ENCODE measurements at regions of chr2 and their contacts with region 1.

Region 1: GRCh38 chr2:64330281-64331113 is 123.5 kb upstream of the LGALSL start:
- DNase-seq: peak; percentile 82
- H3K4me3 Mint-ChIP-seq: peak overlapping the region; percentile 54
- H3K27ac Mint-ChIP-seq: peak overlapping the region; percentile 46
- H3K4me1 Mint-ChIP-seq: peaks cover 41% of the 10 kb centered on the region
- H3K27me3 Mint-ChIP-seq: no peaks in the 10 kb centered on the region

Region 2: DNA sequence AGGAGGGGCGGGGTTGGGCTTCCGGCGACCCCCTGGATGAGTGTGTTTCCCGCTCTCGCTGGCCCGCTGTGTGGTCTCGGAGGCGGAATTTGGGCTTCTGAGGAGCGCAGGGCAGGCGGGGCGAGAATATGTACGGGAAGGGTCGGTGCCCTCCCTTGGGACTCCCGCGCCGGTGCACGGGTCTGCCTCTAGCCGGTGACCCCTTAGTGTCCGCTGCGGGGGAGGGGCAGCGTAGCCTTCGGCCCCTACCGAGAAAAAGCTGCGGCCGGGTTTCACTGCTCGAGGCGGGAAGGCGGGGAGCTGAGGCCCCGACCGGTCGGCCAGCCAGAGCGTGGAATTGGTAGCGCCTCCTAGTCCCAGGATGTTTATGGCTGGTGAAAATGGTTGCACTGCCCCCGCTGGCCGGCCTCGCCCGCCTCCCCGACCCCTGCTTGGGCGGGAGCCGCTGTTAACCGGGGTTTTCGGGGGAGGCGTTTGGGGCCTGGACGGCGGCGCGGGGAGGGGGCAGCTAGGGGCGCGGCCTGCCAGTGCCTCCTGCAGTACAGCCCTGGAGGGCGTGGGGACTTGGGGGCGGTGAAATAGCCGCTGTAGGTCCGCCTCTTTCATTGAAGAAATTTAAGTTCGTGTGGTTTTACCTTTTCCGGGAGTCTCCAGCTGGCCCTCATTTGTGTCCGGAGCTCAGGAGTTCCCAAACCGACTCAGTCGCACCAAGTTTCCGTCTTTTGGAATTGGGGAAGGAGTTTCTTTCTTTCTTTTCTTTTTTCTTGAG is 489.1 kb before region 1 on chr2 and contains the start of gene UGP2:
- CTCF ChIA-PET with region 1: no interaction called
- POLR2A ChIA-PET with region 1: interaction called, 7 read pairs
- intact Hi-C with region 1: loop called (anchors 2 kb)
- DNase-seq: peak; percentile 91
- H3K4me3 Mint-ChIP-seq: peak within 1 kb of the TSS; percentile 99
- H3K27ac Mint-ChIP-seq: peak within 1 kb of the TSS; percentile 100
- H3K4me1 Mint-ChIP-seq: peaks cover 44% of the 10 kb centered on the region
- H3K27me3 Mint-ChIP-seq: no peaks in the 10 kb centered on the region
- total RNA-seq, gene UGP2: 113 to 119 TPM

Region 3: DNA sequence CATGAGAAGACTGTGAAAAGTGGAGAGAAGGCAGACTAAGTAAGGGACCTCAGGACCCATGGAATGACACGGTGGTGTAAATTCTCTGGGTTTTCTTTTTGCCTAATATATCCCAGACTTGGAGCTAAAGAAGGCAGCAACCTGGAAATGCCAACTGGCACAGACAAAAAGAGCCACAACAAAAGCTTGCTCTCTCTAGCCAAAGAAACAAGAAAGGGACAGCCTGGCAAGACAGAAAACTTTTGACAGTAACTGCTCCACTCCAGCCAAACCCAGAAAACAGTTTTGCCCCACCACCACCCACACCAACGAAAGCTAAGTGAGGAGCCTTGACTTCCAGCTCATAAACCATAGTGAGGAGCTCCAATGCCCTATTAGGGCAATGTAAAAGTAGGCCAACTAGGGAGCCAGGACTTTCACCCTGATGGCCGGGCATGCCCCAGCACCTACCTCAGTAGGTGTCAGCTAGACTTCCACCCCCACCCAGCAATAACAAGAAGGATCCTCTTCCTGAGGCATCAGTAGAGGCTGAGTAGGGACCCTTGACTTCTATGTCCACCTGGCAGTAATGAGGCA is 221.7 kb before region 1 on chr2:
- CTCF ChIA-PET with region 1: interaction called, 10 read pairs
- POLR2A ChIA-PET with region 1: interaction called, 4 read pairs
- intact Hi-C with region 1: no loop called
- DNase-seq: peak; percentile 39
- H3K4me3 Mint-ChIP-seq: no peak overlapping the region
- H3K27ac Mint-ChIP-seq: peak overlapping the region; percentile 49
- H3K4me1 Mint-ChIP-seq: peaks cover 76% of the 10 kb centered on the region
- H3K27me3 Mint-ChIP-seq: no peaks in the 10 kb centered on the region

Region 4: GRCh38 chr2:64214281-64215115 is 116.0 kb before region 1 on chr2:
- CTCF ChIA-PET with region 1: interaction called, 47 read pairs
- POLR2A ChIA-PET with region 1: interaction called, 63 read pairs
- intact Hi-C with region 1: loop called (anchors 1 kb)
- DNase-seq: peak; percentile 59
- H3K4me3 Mint-ChIP-seq: peak overlapping the region; percentile 63
- H3K27ac Mint-ChIP-seq: peak overlapping the region; percentile 97
- H3K4me1 Mint-ChIP-seq: peaks cover 56% of the 10 kb centered on the region
- H3K27me3 Mint-ChIP-seq: no peaks in the 10 kb centered on the region

Region 5: GRCh38 chr2:64311948-64312621 is 18.4 kb before region 1 on chr2:
- CTCF ChIA-PET with region 1: interaction called, 38 read pairs
- POLR2A ChIA-PET with region 1: no interaction called
- intact Hi-C with region 1: no loop called
- DNase-seq: no peak
- H3K4me3 Mint-ChIP-seq: no peak overlapping the region
- H3K27ac Mint-ChIP-seq: no peak overlapping the region
- H3K4me1 Mint-ChIP-seq: no peaks in the 10 kb centered on the region
- H3K27me3 Mint-ChIP-seq: no peaks in the 10 kb centered on the region

Region 6: GRCh38 chr2:64470766-64471295 is 140.3 kb after region 1 on chr2:
- CTCF ChIA-PET with region 1: interaction called, 368 read pairs
- POLR2A ChIA-PET with region 1: no interaction called
- intact Hi-C with region 1: no loop called
- DNase-seq: no peak
- H3K4me3 Mint-ChIP-seq: no peak overlapping the region
- H3K27ac Mint-ChIP-seq: no peak overlapping the region
- H3K4me1 Mint-ChIP-seq: no peaks in the 10 kb centered on the region
- H3K27me3 Mint-ChIP-seq: peaks cover 1% of the 10 kb centered on the region

Region 7: GRCh38 chr2:64865073-64865830 is 534.8 kb after region 1 on chr2:
- CTCF ChIA-PET with region 1: interaction called, 18 read pairs
- POLR2A ChIA-PET with region 1: no interaction called
- intact Hi-C with region 1: loop called (anchors 1 kb)
- DNase-seq: peak; percentile 72
- H3K4me3 Mint-ChIP-seq: peak overlapping the region; percentile 57
- H3K27ac Mint-ChIP-seq: no peak overlapping the region
- H3K4me1 Mint-ChIP-seq: no peaks in the 10 kb centered on the region
- H3K27me3 Mint-ChIP-seq: peaks cover 5% of the 10 kb centered on the region